Adrenal gland (tissue), 19 donors: ENCODE measurements at regions of chr21 and their contacts with region 1.

Region 1: DNA sequence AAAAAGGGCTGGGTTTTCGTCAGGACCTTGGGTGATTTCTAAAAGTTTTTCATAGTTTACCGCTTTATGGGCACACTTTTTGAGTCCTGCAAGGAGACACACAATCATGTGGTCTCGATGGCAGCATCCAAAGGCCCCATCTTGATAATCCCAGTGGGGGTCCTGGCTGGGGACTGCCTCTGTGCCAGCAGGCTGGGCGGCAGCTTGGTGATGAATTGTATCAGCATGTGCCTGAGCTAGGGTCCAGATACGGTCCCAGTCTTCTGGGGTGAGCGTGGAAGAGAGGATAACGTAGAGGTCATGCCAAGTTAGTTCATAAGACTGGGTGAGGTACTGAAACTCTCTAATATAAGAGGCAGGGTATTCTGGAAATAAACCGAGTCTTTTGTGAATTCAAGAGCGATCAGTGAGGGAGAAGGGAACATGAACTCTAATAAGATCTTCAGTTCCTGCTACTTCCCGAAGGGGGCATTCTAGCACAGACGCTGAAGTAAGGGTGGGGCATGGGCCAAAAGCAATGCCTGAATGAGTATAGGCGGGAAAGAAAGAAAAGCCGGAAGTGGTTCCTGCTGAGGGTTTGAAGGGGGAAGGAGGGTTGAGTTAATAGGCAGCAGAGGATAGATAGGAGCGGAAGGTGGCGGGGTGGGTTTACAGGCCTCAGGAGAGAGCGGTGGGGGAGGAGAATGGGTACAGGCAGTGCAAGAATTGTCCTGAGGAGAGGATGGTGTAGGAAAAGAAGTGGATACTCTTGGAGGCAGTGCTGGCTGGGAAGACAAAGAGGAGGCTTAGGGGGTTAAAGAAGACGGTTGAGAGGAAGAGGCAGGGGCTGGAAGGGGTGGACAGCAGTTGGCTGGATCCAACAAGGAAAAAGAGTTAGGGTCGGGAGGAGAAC is 1.6 kb downstream of the ERVH48-1 start:
- DNase-seq: peak; percentile 64 to 88 (median 78)
- H3K4me3 ChIP-seq: no peak overlapping the region
- H3K27ac ChIP-seq: no peak overlapping the region
- H3K4me1 ChIP-seq: no peaks in the 10 kb centered on the region
- H3K27me3 ChIP-seq: no peaks in the 10 kb centered on the region
- CTCF ChIP-seq: peak; percentile 62 to 96 (median 79)
- POLR2A ChIP-seq: no peak

Region 2: DNA sequence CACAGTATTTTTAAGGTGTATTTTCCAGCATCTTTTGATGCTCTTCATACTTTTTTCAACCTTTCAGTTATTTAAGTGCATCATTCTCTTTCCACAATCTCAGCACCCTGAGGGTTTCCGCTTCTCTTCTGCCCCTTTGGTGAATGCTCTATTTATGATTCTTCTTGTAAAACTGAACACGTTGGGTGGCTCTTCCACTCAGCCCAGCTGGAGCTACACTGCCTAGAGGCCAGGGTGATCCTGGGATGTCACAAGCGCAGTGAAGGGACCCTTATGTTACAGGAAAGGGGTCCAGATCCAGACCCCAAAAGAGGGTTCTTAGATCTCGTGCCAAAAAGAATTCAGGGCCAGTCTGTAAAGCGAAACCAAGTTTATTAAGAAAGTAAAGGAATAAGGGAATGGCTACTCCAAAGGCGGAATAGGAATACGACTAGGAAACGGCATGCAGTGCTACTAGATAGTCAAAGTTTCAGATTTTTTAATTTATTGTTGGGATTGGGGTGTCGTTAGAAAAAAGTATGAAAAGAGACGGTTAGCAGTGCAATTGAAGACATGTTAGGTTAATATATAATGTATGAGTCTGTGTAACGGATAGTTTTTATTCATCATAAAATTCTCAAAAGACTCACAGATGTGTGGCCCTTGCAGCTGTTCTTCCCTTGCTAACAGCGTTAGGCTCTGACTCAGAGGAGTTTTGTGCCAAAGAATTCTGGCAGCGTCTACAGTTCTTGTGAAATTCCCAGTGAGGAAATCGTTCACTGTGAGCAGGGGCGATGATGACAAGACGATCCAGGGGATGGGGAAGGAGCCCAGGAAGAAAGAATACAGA is 16.0 kb after region 1 on chr21:
- intact Hi-C with region 1: no loop called
- DNase-seq: peak; percentile 80 to 94 (median 92)
- H3K4me3 ChIP-seq: no peak overlapping the region
- H3K27ac ChIP-seq: peak overlapping the region in 3 of 5 donors; percentile 10 to 67 (median 58)
- H3K4me1 ChIP-seq: peaks cover 0 to 5% of the 10 kb centered on the region in 2 donors
- H3K27me3 ChIP-seq: no peaks in the 10 kb centered on the region
- CTCF ChIP-seq: no peak
- POLR2A ChIP-seq: no peak

Region 3: GRCh38 chr21:42964546-42965225 is 40.9 kb after region 1 on chr21:
- intact Hi-C with region 1: loop called in 1 of 2 experiments (anchors 5 kb)
- DNase-seq: peak in 1 of 7 donors; percentile 35
- H3K4me3 ChIP-seq: no peak overlapping the region
- H3K27ac ChIP-seq: no peak overlapping the region
- H3K4me1 ChIP-seq: no peaks in the 10 kb centered on the region
- H3K27me3 ChIP-seq: no peaks in the 10 kb centered on the region
- CTCF ChIP-seq: no peak
- POLR2A ChIP-seq: no peak